Activated CD4-positive, alpha-beta memory T cell treated with anti-CD3 and anti-CD28 coated beads, Interleukin-2, amount 10 ng/mL, durations not matched to agents 7 days and 5 days (primary cell): ENCODE measurements at regions of chr2 and their contacts with region 1.

Region 1: GRCh38 chr2:113181258-113182051 is 7.7 kb downstream of the PSD4 start:
- DNase-seq: peak; percentile 45
- H3K4me3 Mint-ChIP-seq: peak overlapping the region; percentile 27
- H3K27ac Mint-ChIP-seq: peak overlapping the region; percentile 71
- H3K4me1 Mint-ChIP-seq: peaks cover 93% of the 10 kb centered on the region
- H3K27me3 Mint-ChIP-seq: no peaks in the 10 kb centered on the region

Region 2: DNA sequence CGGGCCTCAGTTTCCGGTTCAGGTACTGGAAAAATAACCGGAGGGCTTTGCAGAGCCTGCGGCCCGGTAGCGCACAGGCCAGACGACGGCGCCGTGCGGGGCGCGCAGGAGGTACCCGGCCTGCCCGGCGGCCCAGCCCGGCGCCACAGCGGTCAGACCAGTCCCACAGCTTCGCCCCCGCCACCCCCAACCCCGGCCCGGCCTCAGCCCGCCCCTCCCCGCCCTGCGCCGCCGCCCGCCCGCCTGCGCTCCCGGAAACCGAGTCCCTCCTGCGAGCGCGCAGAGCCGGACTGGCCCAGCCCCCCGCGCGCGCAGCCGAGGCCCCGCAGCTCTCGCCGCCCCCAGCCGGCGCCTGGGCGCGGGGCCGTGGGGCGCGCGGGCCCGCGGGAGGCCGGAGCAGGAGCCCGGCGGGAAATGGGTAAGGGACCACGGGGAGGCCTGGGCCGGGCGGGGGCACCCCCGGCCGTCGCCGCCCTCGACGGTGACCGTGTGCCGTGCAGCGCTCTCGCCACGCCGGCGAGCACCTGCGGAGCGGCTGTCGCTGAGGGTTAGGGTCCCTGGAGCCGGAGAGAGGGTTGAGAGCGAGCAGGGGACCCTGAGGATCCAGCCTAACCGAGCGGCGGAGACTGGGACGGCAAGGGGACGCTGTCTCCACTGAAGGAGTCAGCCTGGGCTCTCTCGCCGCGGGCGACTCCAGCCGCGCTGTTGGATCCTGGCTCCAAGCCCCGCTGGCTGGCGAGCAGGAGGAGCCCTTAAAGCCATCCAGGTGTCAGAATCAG is 24.1 kb before region 1 on chr2:
- CTCF ChIA-PET with region 1: interaction called, 43 read pairs
- POLR2A ChIA-PET with region 1: interaction called, 108 read pairs
- DNase-seq: peak; percentile 57
- H3K4me3 Mint-ChIP-seq: peak overlapping the region; percentile 79
- H3K27ac Mint-ChIP-seq: peak overlapping the region; percentile 64
- H3K4me1 Mint-ChIP-seq: peaks cover 18% of the 10 kb centered on the region
- H3K27me3 Mint-ChIP-seq: peaks cover 8% of the 10 kb centered on the region

Region 3: DNA sequence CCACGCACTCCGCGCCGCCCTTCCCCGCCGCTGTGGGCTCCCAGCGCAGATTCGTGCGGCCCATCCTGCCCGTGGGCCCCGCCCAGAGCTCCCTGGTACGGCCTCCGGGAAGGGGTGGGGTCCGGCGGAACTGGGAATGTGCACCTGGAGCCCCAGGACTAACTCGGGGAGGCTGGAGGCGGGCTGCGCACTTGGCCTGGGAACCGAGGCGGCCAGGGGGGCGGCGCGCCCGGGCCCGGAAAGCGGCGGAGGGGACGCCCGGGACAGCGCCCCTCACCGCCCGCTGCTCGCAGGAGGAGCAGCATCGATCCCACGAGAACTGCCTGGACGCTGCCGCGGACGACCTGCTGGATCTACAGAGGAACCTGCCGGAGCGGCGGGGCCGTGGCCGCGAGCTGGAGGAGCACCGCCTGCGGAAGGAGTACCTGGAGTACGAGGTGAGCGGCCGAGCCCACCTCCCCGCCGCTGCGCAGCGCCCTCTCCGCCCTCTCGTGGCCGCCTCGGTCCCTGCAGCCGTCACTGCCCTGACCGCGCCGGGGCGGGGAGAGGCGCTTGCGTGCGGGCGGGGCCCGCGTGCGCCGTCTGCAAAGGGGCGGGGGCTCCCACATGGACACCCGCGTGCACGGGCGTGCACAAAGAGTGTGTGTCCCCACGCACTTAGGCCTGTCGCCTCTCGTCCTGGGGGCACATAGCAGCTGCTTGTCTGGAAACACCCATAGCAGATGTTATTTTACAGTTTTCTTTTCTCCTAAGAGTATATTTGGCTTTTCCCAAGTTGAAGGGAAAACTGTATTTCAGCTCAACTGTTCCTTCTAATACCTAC is 17.5 kb after region 1 on chr2:
- CTCF ChIA-PET with region 1: interaction called, 22 read pairs
- POLR2A ChIA-PET with region 1: interaction called, 50 read pairs
- DNase-seq: peak; percentile 82
- H3K4me3 Mint-ChIP-seq: no peak overlapping the region
- H3K27ac Mint-ChIP-seq: no peak overlapping the region
- H3K4me1 Mint-ChIP-seq: peaks cover 48% of the 10 kb centered on the region
- H3K27me3 Mint-ChIP-seq: no peaks in the 10 kb centered on the region